Cardiac septum (tissue), 1 donor: ENCODE measurements at regions of chr1 and their contacts with region 1.

Region 1: DNA sequence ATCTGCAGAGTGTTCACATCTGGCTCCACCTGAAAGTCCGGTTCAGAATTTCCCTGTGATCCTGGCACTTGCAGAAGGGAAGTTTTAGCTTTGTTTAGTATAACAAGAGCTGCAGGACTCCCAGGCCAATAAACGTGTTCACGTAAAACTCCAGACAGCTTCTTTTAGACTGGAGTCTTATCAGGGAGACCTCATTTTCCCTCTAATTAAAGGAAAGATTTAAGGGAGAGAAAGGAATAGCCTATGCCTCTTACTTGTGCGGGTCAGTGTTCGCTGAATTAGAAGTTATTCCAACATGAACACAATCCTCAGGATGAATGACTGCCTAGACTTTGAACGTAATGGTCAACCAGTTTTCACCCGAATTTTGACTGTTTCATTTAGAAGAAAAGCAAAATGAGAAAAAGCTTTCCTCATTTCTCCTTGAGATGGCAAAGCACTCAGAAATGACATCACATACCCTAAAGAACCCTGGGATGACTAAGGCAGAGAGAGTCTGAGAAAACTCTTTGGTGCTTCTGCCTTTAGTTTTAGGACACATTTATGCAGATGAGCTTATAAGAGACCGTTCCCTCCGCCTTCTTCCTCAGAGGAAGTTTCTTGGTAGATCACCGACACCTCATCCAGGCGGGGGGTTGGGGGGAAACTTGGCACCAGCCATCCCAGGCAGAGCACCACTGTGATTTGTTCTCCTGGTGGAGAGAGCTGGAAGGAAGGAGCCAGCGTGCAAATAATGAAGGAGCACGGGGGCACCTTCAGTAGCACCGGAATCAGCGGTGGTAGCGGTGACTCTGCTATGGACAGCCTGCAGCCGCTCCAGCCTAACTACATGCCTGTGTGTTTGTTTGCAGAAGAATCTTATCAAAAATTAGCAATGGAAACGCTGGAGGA is 202.1 kb upstream of the SGIP1 start:
- DNase-seq: peak; percentile 84

Region 2: DNA sequence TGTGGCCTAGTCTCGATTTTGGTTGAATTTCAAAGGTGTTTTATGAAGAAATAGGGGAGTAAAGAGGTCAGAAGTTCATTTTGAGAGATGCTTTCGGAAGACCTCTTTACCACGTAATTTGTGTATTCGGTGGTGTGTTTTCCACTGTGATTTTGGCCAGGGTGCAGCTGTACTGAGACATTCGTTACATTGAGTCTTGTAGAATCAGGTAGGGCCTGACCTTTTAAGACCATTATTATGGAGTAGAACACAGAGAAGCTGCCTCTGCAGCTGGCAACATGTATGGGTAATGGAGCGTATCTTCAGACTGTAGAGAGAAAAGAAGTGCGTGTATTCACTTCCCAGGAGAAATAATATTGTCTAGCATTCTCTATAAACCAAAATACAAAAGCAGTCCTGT is 212.8 kb before region 1 on chr1:
- intact Hi-C with region 1: no loop called
- DNase-seq: no peak

Region 3: DNA sequence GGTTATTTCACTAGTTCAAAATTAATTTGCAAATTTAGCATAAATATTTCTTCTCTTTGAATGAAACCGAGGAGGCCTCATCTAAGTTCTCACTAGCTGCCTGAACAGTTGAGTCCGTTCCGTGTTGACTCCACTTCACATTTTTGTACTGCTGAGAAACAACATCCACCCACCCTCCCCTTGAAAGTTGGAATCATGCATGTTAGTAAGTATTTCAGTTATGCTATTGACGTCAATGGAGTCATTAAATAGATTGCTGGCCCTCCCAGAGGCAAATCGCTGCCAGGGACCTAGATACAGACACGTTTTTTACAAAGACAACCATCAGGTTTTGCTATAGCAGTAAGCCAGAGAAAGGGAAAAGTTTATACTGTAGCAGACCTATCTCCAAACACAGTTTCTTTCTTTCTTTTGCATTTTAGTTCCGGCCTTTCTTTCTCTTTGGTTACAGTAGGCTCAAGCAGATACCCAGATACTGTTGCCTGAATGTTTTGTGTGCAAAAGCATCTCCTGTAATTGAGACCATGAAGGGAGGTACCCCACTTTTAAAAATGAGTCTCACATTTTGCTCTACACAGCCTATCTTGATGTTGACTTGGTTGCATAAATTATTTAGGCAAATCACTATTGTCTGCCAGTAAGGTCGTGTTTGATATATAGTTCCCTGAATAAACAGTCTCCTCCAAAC is 60.5 kb before region 1 on chr1:
- intact Hi-C with region 1: loop called (anchors 1 kb)
- DNase-seq: peak; percentile 82

Region 4: GRCh38 chr1:66349242-66349641 is 17.3 kb after region 1 on chr1:
- intact Hi-C with region 1: loop called (anchors 2 kb)
- DNase-seq: no peak

Region 5: DNA sequence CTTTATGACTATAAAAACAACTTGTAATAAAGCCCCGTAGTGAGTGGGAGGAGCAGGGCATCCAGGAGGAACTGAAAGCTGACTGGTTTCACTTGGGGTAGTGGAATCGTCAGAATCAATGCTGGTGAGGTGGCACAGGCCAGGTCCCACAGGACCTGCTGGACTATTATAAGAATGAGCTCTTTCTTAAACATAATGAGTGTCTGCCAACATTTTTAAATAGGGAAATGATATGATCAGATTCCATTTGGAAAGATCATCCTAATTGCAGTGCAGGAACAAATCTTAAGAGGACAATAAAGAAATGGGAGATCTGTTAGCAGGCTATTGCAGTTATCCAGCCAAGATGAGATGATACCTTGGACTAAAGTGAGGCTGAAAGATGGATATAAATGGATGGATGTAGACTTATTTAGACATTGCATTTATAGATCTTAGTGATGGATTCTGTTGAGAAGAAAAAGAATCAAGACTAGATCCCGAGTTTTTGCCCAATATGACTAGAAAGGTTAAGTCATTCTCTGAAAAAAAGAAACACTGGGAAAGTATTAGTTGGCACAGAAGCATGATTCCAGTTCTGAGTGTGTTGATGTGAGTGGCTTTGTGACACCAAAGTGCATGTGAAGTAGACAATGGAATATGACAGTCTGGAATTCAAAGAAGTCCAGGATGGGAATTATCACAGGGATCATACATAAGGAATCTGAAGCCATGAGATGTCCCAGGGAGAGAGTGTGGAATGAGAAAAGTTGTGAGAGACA is 48.7 kb after region 1 on chr1:
- intact Hi-C with region 1: no loop called
- DNase-seq: no peak

Region 6: GRCh38 chr1:66436378-66437145 is 104.7 kb after region 1 on chr1:
- intact Hi-C with region 1: no loop called
- DNase-seq: no peak